ENCODE measurements at regions of chr16 and their contacts with region 1.

Region 1: DNA sequence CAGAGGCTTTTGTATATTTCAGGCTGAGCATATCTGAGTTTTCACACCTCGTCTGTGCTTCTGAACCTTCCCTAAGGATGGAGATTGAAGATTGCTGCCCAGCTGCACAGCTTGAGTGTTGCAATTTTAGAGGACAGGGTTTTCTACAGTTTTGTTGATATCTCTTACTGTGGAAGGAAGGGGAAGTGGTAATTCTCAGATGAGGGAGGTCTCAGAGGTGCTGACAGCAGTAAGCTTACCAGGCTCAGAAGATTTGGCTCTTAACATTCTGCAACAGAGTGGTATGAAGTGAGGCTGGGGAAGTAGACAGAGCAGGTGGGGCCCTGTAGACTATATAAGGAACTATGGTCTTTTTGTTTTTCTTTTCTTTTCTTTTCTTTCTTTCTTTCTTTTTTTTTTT is 45.8 kb upstream of the ARHGAP17 start:
- DNase-seq: no peak
- ATAC-seq: peak; percentile 84
- H3K4me3 Mint-ChIP-seq: no peak overlapping the region
- H3K27ac Mint-ChIP-seq: peak overlapping the region; percentile 72
- H3K4me1 Mint-ChIP-seq: peaks cover 44% of the 10 kb centered on the region
- H3K27me3 Mint-ChIP-seq: no peaks in the 10 kb centered on the region
- CTCF ChIP-seq: no peak

Region 2: DNA sequence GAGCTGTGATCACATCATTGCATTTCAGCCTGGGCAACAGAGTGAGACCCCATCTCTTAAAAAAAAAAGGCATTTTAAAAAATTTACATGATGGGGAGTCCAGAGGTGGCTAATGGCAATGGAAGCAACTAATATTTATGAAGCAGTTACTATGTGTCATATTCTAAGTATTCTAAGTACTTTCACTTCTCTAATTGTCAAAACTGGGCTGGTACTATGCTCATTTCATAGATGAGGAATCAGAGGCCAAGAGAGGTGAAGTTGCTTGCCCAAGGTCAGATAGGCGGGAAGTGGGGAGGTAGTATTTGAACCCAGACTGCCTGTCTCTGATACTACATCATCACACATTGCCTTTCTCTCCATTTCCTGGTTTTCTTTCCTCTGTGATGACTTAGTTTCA is 164.5 kb before region 1 on chr16:
- CTCF ChIA-PET with region 1: no interaction called
- POLR2A ChIA-PET with region 1: no interaction called
- intact Hi-C with region 1: no loop called
- DNase-seq: no peak
- ATAC-seq: no peak
- H3K4me3 Mint-ChIP-seq: no peak overlapping the region
- H3K27ac Mint-ChIP-seq: no peak overlapping the region
- H3K4me1 Mint-ChIP-seq: no peaks in the 10 kb centered on the region
- H3K27me3 Mint-ChIP-seq: no peaks in the 10 kb centered on the region
- CTCF ChIP-seq: no peak

Region 3: DNA sequence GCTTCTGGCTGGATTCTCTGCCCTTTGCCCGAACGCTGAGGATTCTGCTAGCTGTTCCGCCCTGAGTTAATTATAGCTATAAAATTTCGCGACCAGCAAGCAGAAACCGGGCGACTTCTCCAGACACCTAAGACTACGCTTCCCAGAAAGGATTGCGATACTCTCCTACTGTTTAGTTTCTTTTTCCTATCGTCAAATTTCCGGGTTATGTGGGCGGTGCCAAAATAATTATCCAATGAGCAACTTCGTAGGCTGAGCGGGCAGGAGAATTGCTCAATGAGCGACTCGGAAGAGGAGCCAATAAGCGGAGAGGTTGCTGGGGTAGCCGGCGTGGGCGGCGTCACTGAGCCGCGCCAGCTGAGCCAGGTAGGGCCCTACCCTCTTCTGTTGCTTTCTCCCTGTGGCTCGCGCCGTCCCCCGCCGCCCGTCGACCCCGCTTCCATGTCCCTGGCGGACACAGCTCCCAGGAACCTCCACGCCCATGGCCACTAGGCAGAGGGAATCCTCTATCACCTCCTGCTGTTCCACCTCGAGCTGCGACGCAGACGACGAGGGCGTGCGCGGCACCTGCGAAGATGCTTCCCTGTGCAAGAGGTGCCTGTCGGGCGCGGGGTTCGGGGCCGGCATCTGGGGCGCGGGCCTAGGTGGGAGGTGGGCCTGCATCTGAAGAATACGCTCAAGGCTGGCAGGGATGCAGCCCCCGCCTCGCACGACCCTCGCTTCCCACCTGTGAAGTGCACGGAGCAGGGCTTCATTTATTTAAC is 50.7 kb after region 1 on chr16 and contains the start of gene LCMT1:
- CTCF ChIA-PET with region 1: interaction called, 23 read pairs
- POLR2A ChIA-PET with region 1: interaction called, 3 read pairs
- intact Hi-C with region 1: loop called (anchors 5 kb)
- DNase-seq: peak; percentile 97
- ATAC-seq: peak; percentile 78
- H3K4me3 Mint-ChIP-seq: peak within 1 kb of the TSS; percentile 80
- H3K27ac Mint-ChIP-seq: peak within 1 kb of the TSS; percentile 98
- H3K4me1 Mint-ChIP-seq: peaks cover 53% of the 10 kb centered on the region
- H3K27me3 Mint-ChIP-seq: no peaks in the 10 kb centered on the region
- CTCF ChIP-seq: no peak
- total RNA-seq, gene LCMT1: 37.1 to 40.7 TPM